Gastrocnemius medialis (tissue), 4 donors: ENCODE measurements at regions of chr11 and their contacts with region 1.

Region 1: DNA sequence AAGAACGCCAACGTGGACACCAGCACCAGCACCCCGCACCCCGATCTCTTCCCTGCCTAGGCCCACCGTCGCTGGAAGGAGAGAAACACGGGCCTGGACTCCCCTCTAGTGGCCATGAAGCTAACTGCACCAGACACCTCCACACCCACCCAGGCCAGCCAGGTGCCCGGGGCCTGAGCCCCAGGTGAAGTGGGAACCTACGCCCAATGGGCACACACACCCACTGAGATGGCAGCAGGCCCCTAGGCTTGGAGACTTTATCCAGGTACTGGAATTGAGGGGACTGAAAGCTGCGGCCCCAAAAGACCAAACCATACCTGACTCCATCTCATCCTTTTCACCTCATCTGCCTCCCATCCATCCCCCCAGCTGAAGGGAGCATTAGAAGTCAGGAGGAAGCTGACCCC is 81.0 kb downstream of the BUD13 start:
- DNase-seq: no peak
- ATAC-seq: peak; percentile 47 to 58
- H3K4me3 ChIP-seq: no peak overlapping the region
- H3K27ac ChIP-seq: no peak overlapping the region
- H3K4me1 ChIP-seq: no peaks in the 10 kb centered on the region
- H3K27me3 ChIP-seq: peaks cover 0 to 7% (median 0%) of the 10 kb centered on the region in 3 donors
- CTCF ChIP-seq: peak; percentile 59 to 81 (median 73)
- POLR2A ChIP-seq: no peak

Region 2: DNA sequence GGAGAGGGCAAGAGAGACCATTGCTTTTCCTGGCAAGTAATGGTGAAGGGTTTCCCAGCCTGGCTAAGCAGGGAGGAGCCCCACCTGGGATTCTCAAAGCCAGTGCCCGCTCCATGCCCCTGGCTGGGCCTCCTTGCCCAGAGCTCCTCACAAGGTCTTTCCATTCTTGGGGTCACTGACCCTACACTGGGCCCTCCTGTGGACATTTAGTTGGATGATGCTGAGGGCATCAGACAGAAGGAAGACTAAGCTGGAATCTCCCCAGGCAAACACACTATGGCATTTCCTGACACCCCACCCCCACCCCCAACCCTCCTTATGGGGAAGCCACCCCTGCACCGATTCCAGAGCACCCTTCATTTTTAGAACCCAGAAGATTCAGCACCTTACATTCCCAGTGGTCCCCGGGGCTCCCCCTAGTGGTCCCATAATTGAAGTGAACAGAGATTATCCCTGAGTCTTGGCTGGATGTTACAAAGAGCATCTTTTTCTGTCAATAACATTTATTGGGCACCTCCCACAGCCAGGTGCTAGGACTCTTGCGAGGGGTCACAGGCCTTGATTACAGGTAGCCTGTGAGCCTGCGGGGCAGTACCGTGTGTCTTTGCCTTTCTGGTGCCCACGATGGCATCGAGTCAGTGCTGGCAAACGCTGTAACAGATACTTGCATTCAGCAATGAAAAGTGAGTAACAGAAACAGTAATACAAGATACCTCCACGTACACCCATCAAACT is 467.5 kb before region 1 on chr11:
- in situ Hi-C with region 1: loop called in 2 of 4 experiments (anchors 25 kb)
- intact Hi-C with region 1: no loop called
- DNase-seq: no peak
- ATAC-seq: no peak
- H3K4me3 ChIP-seq: no peak overlapping the region
- H3K27ac ChIP-seq: no peak overlapping the region
- H3K4me1 ChIP-seq: no peaks in the 10 kb centered on the region
- H3K27me3 ChIP-seq: no peaks in the 10 kb centered on the region
- CTCF ChIP-seq: peak in 4 of 5 experiments; percentile 24 to 66 (median 50)
- POLR2A ChIP-seq: no peak

Region 3: DNA sequence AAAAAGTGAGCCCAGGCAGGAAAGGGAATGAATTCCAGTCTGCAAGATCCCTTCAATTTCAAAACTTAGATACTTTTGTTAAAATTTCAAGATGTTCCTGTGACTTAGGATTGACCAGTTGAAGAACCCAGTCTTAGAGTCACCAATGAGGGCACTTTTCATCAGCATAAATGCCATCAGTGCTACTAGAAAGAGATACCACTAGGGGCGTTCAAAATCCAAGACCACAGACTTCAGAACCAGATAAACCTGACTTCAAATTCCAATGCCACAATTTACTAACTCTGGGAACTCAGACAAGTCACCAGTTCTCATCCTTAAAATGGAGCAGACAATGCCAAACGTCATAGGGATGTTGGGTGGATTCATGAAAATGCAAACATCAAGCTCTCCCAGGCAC is 442.2 kb before region 1 on chr11:
- in situ Hi-C with region 1: no loop called
- intact Hi-C with region 1: no loop called
- DNase-seq: no peak
- ATAC-seq: no peak
- H3K4me3 ChIP-seq: no peak overlapping the region
- H3K27ac ChIP-seq: no peak overlapping the region
- H3K4me1 ChIP-seq: no peaks in the 10 kb centered on the region
- H3K27me3 ChIP-seq: peaks cover 0 to 2% (median 0%) of the 10 kb centered on the region in 3 donors
- CTCF ChIP-seq: no peak
- POLR2A ChIP-seq: no peak

Region 4: GRCh38 chr11:116750070-116750718 is 58.4 kb after region 1 on chr11:
- in situ Hi-C with region 1: no loop called
- intact Hi-C with region 1: no loop called
- DNase-seq: no peak
- ATAC-seq: no peak
- H3K4me3 ChIP-seq: no peak overlapping the region
- H3K27ac ChIP-seq: no peak overlapping the region
- H3K4me1 ChIP-seq: no peaks in the 10 kb centered on the region
- H3K27me3 ChIP-seq: no peaks in the 10 kb centered on the region
- CTCF ChIP-seq: no peak
- POLR2A ChIP-seq: no peak

Region 5: DNA sequence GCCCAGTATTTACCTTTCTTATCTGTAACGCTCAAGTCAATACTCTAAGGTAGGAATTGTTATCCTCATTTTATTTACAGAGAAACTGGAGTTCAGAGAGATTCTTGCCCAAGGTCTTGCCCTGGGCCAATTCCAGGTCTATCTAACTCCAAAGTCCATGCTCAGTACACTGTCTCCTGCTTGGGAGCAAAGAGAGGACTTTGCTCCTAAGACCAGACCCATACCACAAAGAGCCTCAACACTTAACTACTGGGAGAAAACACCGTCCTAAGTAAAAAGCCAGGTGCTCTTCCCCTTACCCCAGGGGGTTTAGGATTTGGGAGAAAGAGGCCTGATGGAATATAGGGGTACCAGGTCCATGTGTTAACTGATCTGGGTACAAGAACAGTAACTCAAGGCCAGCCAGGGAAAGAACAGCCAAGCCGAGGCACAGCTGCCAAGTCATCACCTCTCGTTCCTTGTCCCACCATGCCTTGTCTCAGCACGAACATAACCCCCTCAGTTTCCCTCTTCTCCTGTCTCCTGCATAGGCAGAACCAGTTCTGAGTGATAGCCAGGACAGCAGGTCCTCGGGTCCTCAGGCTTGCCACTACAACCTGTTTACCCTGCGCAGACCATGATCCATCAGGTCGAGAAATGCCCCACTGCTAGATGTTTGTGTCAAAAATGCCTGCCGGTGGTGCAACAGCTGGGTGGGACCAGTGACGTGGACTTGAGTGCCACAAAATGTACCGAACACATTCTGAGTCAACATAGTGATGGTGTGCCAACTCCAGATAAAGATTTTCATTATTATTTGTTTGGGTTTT is 116.8 kb after region 1 on chr11:
- in situ Hi-C with region 1: no loop called
- intact Hi-C with region 1: no loop called
- DNase-seq: no peak
- ATAC-seq: peak; percentile 32 to 42
- H3K4me3 ChIP-seq: no peak overlapping the region
- H3K27ac ChIP-seq: peak overlapping the region in 1 of 4 donors; percentile 0
- H3K4me1 ChIP-seq: peaks cover 0 to under 1% of the 10 kb centered on the region in 2 donors
- H3K27me3 ChIP-seq: no peaks in the 10 kb centered on the region
- CTCF ChIP-seq: no peak
- POLR2A ChIP-seq: no peak